GM10248 (cell line): ENCODE measurements at regions of chr17 and their contacts with region 1.

Region 1: GRCh38 chr17:16987830-16988601 is 16.1 kb upstream of the TNFRSF13B start:
- DNase-seq: peak; percentile 90
- CTCF ChIP-seq: no peak

Region 2: GRCh38 chr17:16814439-16814838 is 173.6 kb before region 1 on chr17:
- CTCF ChIA-PET with region 1: no interaction called
- POLR2A ChIA-PET with region 1: no interaction called
- DNase-seq: no peak
- CTCF ChIP-seq: no peak

Region 3: DNA sequence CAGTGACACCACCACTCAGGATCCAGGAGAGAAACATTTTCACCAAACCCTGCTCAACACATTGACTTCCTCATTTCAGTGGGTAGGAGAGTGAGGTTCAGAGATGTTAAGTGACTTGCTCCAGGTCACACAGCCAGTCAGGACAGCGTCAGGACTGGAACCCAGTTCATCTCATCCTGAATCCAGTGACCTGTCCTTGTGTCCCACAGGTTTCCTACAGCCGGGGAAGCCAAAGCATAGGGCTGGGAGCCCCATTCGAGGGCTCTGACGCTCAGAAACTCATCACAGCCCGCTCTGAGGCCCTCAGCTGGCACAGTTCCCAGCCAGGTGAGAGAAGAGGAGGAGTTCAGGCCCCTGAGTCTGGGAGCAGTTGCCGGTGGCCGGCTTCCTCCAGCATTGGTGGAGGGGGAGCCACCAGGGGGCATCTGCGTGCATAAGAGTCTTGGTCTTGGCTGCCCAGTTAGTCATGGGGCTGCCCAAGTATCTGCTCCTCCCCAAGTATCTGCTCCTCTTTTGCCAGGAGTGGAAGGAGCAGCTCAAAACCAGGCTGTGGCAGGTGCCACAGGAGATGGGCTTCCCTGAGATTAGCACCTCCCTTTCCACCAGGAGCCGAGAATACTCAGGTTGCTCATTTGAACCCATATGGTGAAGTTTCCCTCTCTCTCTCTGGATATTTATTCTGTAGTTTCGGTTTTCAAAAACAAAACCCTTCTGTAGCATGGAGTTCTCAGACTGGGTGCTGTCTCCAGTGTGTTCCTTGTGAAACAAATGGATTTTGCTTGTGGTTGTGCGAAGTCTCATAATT is 72.1 kb before region 1 on chr17:
- CTCF ChIA-PET with region 1: interaction called, 24 read pairs
- POLR2A ChIA-PET with region 1: no interaction called
- DNase-seq: peak; percentile 76
- CTCF ChIP-seq: peak; percentile 75

Region 4: DNA sequence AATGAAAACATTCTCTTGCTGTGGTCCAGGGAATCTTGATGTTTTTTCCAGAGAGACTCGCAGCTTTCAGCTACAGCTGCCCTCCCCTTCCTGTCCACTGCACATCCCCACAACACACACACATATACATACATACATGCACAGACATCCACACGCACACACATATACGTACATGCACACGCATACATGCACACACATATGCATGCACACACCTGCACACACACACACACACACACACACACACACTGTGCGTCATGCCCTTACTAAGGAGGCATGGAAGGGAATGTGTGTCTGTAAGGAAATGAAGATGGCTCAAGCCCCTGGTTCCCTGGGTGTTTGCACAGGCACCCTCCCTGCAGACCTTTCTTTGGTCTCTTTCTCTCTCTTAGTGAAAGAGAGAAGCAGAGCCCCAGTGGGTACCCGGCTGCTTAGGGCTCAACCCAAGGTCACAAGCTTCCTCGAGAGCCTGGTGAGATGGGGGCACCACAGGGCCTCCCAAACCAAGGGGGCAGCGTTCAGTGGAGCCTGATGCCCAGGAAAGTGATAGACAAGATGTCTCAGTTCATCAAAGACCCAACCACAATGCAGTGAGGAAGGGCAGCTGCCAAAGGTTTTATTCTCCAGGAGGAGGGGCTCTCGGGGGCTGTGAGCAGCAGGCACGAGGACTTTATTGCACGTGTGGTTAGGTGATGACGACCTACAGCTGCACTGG is 49.4 kb before region 1 on chr17:
- CTCF ChIA-PET with region 1: no interaction called
- POLR2A ChIA-PET with region 1: no interaction called
- DNase-seq: no peak
- CTCF ChIP-seq: no peak

Region 5: GRCh38 chr17:16971458-16972338 is 16.3 kb before region 1 on chr17 and contains the start of gene TNFRSF13B:
- CTCF ChIA-PET with region 1: interaction called, 163 read pairs
- POLR2A ChIA-PET with region 1: interaction called, 65 read pairs
- DNase-seq: peak; percentile 50
- CTCF ChIP-seq: no peak

Region 6: DNA sequence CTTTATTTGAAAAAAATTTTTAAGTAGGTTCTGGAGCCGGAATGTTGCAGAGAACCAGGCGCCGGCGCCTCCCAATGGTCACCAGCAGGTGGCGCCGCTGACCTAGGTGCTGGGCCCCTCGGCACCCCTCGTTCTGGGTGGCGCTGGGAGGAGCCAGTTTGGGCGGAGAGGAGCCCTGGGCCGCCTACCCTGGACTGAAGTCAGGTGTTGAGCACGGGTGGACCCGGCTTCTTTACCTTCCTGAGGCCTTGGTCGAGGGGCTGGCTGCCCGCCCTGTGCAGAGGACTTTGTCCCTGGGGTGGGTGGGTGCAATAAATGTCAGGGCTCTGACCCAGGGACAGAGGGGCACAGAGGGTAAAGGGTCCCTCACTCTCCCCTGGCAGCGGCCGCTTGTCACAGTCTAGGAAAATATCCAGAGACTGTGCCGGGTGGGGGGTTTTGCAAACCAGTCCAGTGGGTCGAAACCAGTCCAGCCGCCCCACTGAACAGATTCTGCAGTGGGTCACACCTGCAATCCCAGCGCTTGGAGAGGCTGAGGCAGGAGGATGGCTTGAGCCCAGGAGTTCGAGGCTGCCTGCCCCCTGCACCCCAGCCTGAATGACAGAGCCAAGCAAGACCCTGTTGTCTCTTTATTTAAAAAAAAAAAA is 14.0 kb after region 1 on chr17:
- CTCF ChIA-PET with region 1: interaction called, 18 read pairs
- POLR2A ChIA-PET with region 1: no interaction called
- DNase-seq: peak; percentile 89
- CTCF ChIP-seq: peak; percentile 92

Region 7: GRCh38 chr17:17016199-17016866 is 28.3 kb after region 1 on chr17:
- CTCF ChIA-PET with region 1: interaction called, 13 read pairs
- POLR2A ChIA-PET with region 1: no interaction called
- DNase-seq: no peak
- CTCF ChIP-seq: no peak

Region 8: DNA sequence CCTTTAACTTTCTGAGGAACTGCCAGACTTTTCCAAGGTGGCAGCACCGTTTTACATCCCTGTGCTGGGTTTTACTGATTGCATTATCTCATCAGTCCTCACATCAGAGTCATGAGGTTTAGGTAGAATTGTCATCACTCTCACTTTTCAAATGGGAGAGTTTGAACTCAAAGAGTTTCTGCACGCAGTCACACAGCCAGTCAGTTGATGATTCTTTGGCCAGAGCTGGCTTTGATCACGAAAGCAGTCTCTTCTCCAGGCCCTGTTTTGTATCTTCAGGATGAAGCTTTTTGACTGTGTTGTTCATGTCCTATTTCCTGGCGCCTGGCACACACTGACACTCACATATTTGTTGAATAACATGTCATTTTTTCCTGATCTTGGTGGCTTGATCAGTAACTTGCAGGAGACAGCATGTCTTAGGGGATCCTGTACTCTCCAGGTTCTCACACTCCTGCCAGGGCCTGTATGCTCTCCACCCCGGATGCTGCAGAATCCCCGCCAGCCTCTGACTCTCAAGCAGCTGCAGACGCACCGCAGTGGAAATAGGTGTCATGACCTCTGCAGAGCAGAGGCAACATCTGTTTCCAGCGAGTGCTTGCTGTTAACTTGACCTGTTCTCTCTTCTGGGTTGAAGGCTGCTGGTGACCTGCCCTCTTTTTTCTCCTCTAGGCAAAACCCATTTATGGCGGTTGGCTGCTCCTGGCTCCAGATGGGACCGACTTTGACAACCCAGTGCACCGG is 87.2 kb after region 1 on chr17:
- CTCF ChIA-PET with region 1: no interaction called
- POLR2A ChIA-PET with region 1: no interaction called
- DNase-seq: no peak
- CTCF ChIP-seq: no peak

Region 9: GRCh38 chr17:17108451-17109049 is 120.5 kb after region 1 on chr17:
- CTCF ChIA-PET with region 1: no interaction called
- POLR2A ChIA-PET with region 1: no interaction called
- DNase-seq: no peak
- CTCF ChIP-seq: no peak